ENCODE measurements at regions of chr17 and their contacts with region 1.

Region 1: GRCh38 chr17:50909765-50910605 is 43.8 kb upstream of the TOB1 start:
- DNase-seq: peak; percentile 91
- ATAC-seq: peak; percentile 88
- H3K4me3 Mint-ChIP-seq: no peak overlapping the region
- H3K27ac Mint-ChIP-seq: peak overlapping the region; percentile 81
- H3K4me1 Mint-ChIP-seq: peaks cover 64% of the 10 kb centered on the region
- H3K27me3 Mint-ChIP-seq: no peaks in the 10 kb centered on the region

Region 2: DNA sequence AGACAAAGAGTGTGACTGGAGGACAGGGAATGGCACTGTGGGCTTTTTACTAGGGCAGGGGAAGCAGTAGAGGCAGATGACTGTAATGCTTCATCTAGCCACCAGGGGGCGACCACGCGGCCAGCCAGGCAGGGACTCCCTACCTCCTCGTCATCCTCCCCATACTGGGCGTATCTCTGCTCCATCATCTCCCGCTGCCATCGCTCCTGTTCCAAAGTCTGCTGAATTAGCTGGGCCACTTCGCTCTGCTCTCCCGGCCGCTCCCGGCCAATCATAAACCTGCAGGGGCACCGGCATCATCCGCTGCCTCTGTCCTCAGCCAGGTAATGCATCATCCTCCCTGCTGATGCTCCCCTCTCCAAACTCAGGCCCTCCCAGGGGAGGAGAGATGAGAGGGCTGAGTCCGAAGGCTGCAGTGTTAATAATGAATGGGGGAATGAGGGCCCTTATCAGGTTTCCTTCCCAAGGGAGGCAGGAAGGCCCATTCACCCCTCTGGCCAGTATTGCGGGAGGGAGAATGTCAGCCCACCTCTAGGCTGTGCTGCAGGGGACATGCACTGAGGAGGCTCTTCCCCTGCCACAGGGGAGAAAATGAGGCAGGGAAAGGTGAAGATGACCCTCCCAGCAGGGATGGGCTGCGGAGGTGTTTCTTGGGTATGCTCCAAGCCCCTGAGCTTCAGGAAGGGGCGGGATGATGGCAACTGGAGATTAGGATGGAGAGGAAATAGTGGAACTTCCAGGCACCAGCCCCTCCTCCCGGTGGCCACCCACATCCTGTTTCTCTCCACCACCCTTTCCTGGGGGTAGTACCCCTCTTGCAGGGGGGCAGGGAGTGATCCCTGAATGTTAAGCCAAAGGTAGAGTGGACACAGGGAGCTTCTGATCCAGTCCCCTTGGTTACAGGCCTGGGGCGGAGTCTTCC is 769.8 kb before region 1 on chr17:
- CTCF ChIA-PET with region 1: no interaction called
- POLR2A ChIA-PET with region 1: no interaction called
- intact Hi-C with region 1: no loop called
- DNase-seq: peak; percentile 90
- ATAC-seq: peak; percentile 80
- H3K4me3 Mint-ChIP-seq: no peak overlapping the region
- H3K27ac Mint-ChIP-seq: peak overlapping the region; percentile 70
- H3K4me1 Mint-ChIP-seq: peaks cover 51% of the 10 kb centered on the region
- H3K27me3 Mint-ChIP-seq: no peaks in the 10 kb centered on the region

Region 3: DNA sequence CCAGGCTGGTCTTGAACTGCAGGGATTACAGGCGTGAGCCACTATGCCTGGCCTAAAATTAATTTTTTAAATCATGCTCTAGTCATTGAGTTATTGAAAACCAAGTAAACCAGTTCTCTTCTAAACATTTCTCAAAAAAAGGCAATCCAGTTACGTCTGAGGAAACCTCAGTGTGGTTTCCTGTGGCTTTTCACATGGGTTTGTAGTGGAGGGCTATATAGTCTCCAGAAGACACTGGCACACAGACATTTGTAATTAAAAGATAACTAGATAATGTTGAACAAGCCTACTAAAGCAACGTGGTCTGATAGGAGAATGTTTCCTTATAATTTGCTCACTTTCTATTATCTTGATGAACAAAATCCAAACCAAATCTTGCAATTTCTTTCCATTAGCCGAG is 38.6 kb before region 1 on chr17:
- CTCF ChIA-PET with region 1: interaction called, 3 read pairs
- POLR2A ChIA-PET with region 1: interaction called, 14 read pairs
- intact Hi-C with region 1: loop called (anchors 1 kb)
- DNase-seq: peak; percentile 54
- ATAC-seq: no peak
- H3K4me3 Mint-ChIP-seq: peak overlapping the region; percentile 10
- H3K27ac Mint-ChIP-seq: peak overlapping the region; percentile 0
- H3K4me1 Mint-ChIP-seq: peaks cover 42% of the 10 kb centered on the region
- H3K27me3 Mint-ChIP-seq: no peaks in the 10 kb centered on the region

Region 4: DNA sequence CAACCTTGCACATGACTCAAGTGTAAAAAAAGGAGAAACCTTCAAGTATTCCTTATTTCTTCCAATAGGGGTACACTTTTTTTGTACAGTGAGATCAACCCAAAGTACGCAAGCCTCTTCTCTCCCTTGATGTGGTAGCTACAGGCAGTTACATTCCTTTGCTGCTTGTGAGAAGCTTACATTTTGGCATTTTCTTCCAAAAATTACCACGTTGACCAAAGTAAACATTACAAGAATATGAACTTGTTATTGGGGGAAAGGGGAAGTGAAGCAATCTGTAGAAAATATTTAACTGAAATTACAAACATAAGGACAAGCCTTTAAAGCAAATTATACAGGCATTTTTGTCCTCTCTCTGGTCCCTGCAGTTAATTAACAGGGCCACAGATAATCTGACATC is 53.2 kb after region 1 on chr17:
- CTCF ChIA-PET with region 1: no interaction called
- POLR2A ChIA-PET with region 1: no interaction called
- intact Hi-C with region 1: no loop called
- DNase-seq: no peak
- ATAC-seq: no peak
- H3K4me3 Mint-ChIP-seq: no peak overlapping the region
- H3K27ac Mint-ChIP-seq: no peak overlapping the region
- H3K4me1 Mint-ChIP-seq: peaks cover 6% of the 10 kb centered on the region
- H3K27me3 Mint-ChIP-seq: no peaks in the 10 kb centered on the region

Region 5: DNA sequence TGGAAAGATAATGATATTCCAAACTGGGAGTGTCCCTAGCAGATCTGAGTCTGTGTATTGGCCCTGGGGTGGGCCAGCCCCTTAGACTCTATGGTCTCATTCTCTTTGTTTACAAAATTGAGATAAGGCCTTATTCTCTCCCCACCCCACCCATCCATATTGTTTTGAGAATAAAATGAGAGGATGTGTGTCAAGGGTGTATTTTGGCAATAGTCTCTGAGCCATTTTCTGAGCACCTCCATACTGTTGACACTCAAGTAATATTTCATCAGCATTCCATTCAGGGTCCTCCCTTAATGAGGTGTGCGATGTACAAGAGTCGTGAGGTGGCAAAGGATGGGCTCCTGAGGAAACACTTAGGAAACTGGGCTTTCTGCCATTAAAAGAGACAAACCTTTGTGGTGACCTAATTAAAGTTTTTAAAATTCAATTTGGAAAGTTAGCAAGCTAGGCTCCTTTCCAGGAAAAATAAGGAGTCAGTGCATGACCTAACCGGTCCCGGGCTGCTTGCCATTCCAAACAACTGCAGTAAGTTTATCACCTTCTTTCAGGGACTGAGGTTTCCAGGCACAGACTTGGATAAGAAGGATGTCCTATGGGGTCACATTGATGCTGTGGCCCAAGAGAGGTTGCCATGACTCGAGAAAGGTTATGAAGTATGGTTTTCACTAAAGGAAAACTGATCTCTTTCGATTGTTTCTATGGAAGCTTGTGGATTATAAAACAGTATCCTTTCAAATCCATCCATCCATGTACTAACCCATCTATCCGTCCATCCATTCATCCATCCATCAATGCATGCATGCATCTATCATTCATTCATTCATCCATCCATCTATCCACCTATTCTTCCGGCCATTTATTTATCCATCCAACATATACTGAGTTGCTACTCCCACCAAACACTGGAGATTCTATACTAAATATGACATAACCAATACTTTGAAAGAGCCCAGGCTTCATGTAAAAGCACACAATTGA is 793.7 kb after region 1 on chr17:
- CTCF ChIA-PET with region 1: no interaction called
- POLR2A ChIA-PET with region 1: no interaction called
- intact Hi-C with region 1: no loop called
- DNase-seq: no peak
- ATAC-seq: no peak
- H3K4me3 Mint-ChIP-seq: no peak overlapping the region
- H3K27ac Mint-ChIP-seq: no peak overlapping the region
- H3K4me1 Mint-ChIP-seq: no peaks in the 10 kb centered on the region
- H3K27me3 Mint-ChIP-seq: peaks cover 13% of the 10 kb centered on the region

Measured in activated CD4-positive, alpha-beta T cell treated with anti-CD3 and anti-CD28 coated beads for 36 hours (primary cell).